AG04449 (cell line): ENCODE measurements at regions of chr17 and their contacts with region 1.

Region 1: GRCh38 chr17:2179615-2180295 is 123.8 kb downstream of the SMG6 start:
- DNase-seq: no peak
- H3K4me3 ChIP-seq: no peak overlapping the region
- CTCF ChIP-seq: no peak

Region 2: DNA sequence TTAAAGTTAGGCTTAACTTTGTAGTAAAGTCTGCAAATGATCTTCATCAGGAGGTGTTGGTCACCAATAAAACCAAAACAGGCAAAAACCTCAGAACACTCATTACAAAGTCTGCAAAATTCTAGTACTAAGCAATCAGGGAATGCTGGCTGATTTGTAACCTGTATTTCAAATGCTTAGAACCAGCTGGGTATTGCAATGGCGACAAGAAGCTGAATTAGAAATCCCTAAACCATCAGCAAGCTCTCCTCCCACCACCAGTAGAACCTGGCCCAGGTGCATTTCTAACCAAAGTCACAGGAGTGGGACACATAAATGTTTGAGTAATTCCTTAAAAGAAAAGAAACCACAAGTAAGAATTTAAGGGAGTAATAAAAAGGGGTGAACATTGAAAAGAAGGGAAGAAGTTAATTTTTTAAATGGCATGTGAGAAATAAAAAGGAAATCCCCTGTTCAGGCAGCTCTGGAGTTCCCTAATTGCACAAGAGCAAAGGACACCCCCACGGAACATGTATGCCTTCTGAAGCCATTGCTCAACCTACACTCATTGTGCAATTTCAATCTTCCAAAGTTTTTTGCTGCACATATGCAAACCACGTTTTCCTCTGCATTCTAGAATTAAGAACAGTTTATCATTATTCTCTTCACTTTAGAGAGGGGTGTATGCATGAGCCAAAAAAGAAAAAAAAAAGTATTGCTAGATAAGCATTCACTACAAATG is 21.9 kb before region 1 on chr17:
- CTCF ChIA-PET with region 1: no interaction called
- POLR2A ChIA-PET with region 1: no interaction called
- DNase-seq: peak; percentile 84
- H3K4me3 ChIP-seq: no peak overlapping the region
- CTCF ChIP-seq: no peak

Region 3: GRCh38 chr17:2192367-2193057 is 12.8 kb after region 1 on chr17:
- CTCF ChIA-PET with region 1: interaction called, 7 read pairs
- POLR2A ChIA-PET with region 1: interaction called, 10 read pairs
- DNase-seq: no peak
- H3K4me3 ChIP-seq: no peak overlapping the region
- CTCF ChIP-seq: no peak

Region 4: GRCh38 chr17:2215616-2216364 is 36.0 kb after region 1 on chr17:
- CTCF ChIA-PET with region 1: interaction called, 3 read pairs
- POLR2A ChIA-PET with region 1: interaction called, 12 read pairs
- DNase-seq: no peak
- H3K4me3 ChIP-seq: peak overlapping the region; percentile 42
- CTCF ChIP-seq: no peak